Ascending aorta (tissue), 2 donors: ENCODE measurements at regions of chr4 and their contacts with region 1.

Region 1: GRCh38 chr4:3880615-3881120 is 114.5 kb downstream of the ADRA2C start:
- DNase-seq: peak in 1 of 2 donors; percentile 75
- H3K4me3 ChIP-seq: no peak overlapping the region
- H3K27ac ChIP-seq: no peak overlapping the region
- H3K4me1 ChIP-seq: peaks cover 0 to 8% of the 10 kb centered on the region in 2 donors
- H3K27me3 ChIP-seq: peaks cover 10% of the 10 kb centered on the region
- CTCF ChIP-seq: peak; percentile 49 to 81 (median 62)

Region 2: DNA sequence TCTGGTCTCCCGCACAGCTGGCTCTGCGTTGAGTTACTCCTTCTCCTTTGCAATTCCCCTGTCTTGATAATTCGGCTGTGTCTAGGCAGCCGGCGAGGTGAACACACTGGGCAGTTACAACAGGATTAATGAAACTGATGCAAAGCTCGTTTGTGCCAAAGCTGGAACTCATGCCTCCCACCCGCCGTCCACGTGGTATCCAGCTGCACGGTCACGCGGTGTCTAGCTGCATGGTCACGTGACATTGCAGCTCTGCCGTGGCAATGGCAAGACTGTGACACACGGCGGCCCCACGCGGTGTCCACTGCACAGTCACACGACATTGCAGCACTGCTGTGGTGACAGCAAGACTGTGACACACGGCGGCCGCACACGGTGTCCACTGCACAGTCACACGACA is 317.3 kb before region 1 on chr4:
- intact Hi-C with region 1: loop called (anchors 1 kb)
- DNase-seq: no peak
- H3K4me3 ChIP-seq: no peak overlapping the region
- H3K27ac ChIP-seq: no peak overlapping the region
- H3K4me1 ChIP-seq: no peaks in the 10 kb centered on the region
- H3K27me3 ChIP-seq: no peaks in the 10 kb centered on the region
- CTCF ChIP-seq: no peak